HepG2 (cell line): ENCODE measurements at regions of chr16 and their contacts with region 1.

Region 1: GRCh38 chr16:57893559-57894389 is 77.2 kb downstream of the CNGB1 start:
- DNase-seq: peak; percentile 99
- ATAC-seq: peak; percentile 65
- H3K4me3 ChIP-seq: peak overlapping the region; percentile 52 to 71 (median 62)
- H3K27ac ChIP-seq: peak overlapping the region; percentile 95
- H3K4me1 ChIP-seq: peaks cover 94% of the 10 kb centered on the region
- H3K27me3 ChIP-seq: no peaks in the 10 kb centered on the region; a peak in 1 of 5 replicates
- CTCF ChIP-seq: no peak
- EP300 ChIP-seq: peak; percentile 83 to 95
- POLR2A ChIP-seq: peak; percentile 13 to 59; a peak in 3 of 4 replicates
- RAD21 ChIP-seq: no peak

Region 2: GRCh38 chr16:57795431-57795878 is 98.3 kb before region 1 on chr16:
- CTCF ChIA-PET with region 1: no interaction called
- POLR2A ChIA-PET with region 1: interaction called, 25 read pairs
- in situ Hi-C with region 1: no loop called
- intact Hi-C with region 1: no loop called
- DNase-seq: peak; percentile 73
- ATAC-seq: peak; percentile 3; the same call in 1 of the 3 replicates
- H3K4me3 ChIP-seq: no peak overlapping the region; a peak in 1 of 6 replicates
- H3K27ac ChIP-seq: no peak overlapping the region
- H3K4me1 ChIP-seq: peaks cover 67% of the 10 kb centered on the region
- H3K27me3 ChIP-seq: no peaks in the 10 kb centered on the region
- CTCF ChIP-seq: peak; percentile 73
- EP300 ChIP-seq: no peak
- POLR2A ChIP-seq: no peak
- RAD21 ChIP-seq: peak; percentile 76

Region 3: DNA sequence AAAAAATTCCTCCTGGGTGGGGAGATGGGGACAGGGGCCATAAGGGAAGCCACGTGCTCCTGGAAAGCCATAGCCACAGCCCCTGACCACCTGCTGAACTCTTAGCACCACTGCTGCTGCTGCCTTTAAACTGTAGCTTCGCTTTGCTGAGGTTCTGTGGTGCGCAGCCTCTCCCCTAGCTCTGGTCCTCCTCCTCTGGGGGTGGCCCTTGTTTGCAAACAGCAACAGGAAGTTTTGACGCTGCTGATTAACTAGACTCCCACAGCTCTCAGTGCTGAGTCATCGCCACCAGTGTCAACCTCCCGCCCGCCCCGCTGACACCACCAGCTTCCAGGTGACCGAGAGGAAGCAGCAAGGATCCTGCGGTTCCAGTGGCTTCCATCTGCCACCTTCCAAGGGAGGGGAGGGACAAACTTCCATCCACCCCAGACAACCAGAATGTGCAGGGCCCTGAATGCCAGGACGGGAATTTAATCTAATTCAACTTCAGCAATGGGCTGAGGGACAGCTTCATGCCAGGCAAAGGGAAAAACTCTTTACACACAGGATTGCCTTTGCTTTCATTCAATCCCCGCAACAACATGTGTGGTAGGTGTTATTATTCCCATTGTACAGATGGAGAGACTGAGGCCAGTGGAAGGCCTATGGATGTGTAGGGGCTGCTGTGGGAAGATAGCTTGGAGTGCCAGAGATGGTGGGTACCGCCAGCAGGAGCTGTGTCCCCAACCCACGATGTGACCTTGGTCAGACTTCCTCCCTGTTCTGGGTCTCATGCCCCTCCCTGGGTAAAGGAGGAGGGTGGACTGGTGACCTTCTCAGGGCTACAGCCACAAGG is 83.4 kb before region 1 on chr16:
- CTCF ChIA-PET with region 1: no interaction called
- POLR2A ChIA-PET with region 1: interaction called, 12 read pairs
- in situ Hi-C with region 1: no loop called
- intact Hi-C with region 1: loop called (anchors 1 kb)
- DNase-seq: peak; percentile 92
- ATAC-seq: peak; percentile 93
- H3K4me3 ChIP-seq: peak overlapping the region in 1 of 3 experiments; percentile 41; a peak in 2 of 6 replicates
- H3K27ac ChIP-seq: peak overlapping the region; percentile 63
- H3K4me1 ChIP-seq: peaks cover 71% of the 10 kb centered on the region
- H3K27me3 ChIP-seq: no peaks in the 10 kb centered on the region
- CTCF ChIP-seq: peak; percentile 26; the same call in 1 of the 2 replicates
- EP300 ChIP-seq: peak in 1 of 2 experiments; percentile 80; a peak in 2 of 4 replicates
- POLR2A ChIP-seq: peak; percentile 40 to 85; a peak in 3 of 4 replicates
- RAD21 ChIP-seq: no peak

Region 4: GRCh38 chr16:57871456-57871855 is 22.3 kb before region 1 on chr16:
- CTCF ChIA-PET with region 1: no interaction called
- POLR2A ChIA-PET with region 1: interaction called, 13 read pairs
- in situ Hi-C with region 1: no loop called
- intact Hi-C with region 1: no loop called
- DNase-seq: no peak
- ATAC-seq: no peak
- H3K4me3 ChIP-seq: no peak overlapping the region
- H3K27ac ChIP-seq: no peak overlapping the region
- H3K4me1 ChIP-seq: peaks cover 24% of the 10 kb centered on the region
- H3K27me3 ChIP-seq: 0 out of 5 replicates have a peak, but pooled peaks cover 0 to 4% of the 10 kb centered on the region in 2 experiments
- CTCF ChIP-seq: no peak
- EP300 ChIP-seq: no peak
- POLR2A ChIP-seq: no peak
- RAD21 ChIP-seq: no peak

Region 5: GRCh38 chr16:57920215-57920879 is 26.6 kb after region 1 on chr16:
- CTCF ChIA-PET with region 1: no interaction called
- POLR2A ChIA-PET with region 1: no interaction called
- in situ Hi-C with region 1: no loop called
- intact Hi-C with region 1: no loop called
- DNase-seq: no peak
- ATAC-seq: no peak
- H3K4me3 ChIP-seq: no peak overlapping the region
- H3K27ac ChIP-seq: no peak overlapping the region
- H3K4me1 ChIP-seq: no peaks in the 10 kb centered on the region
- H3K27me3 ChIP-seq: peaks cover 2 to 26% of the 10 kb centered on the region in 2 experiments; a peak in 3 of 5 replicates
- CTCF ChIP-seq: no peak
- EP300 ChIP-seq: no peak
- POLR2A ChIP-seq: no peak
- RAD21 ChIP-seq: no peak

Region 6: DNA sequence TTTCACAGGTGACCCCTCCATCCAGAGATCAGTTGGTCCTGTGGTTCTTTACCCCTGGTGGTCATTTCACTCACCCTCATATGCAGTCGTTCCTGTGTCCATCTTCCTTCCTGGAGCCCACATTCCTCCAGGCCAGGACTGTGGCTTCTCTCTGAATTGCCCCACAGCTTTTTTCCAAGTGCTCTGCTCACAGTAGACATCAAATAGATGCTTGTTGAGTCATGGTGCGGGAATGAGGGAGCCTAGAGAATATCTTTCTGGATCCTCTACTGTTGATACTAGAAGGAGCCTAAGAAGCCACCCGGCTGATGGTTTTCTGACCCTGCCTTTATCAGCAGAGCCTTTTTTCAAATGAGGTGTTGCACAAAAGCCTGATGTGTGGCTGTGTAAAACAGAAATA is 117.9 kb after region 1 on chr16:
- CTCF ChIA-PET with region 1: no interaction called
- POLR2A ChIA-PET with region 1: no interaction called
- in situ Hi-C with region 1: no loop called
- intact Hi-C with region 1: no loop called
- DNase-seq: peak; percentile 41
- ATAC-seq: peak; percentile 71
- H3K4me3 ChIP-seq: no peak overlapping the region
- H3K27ac ChIP-seq: no peak overlapping the region
- H3K4me1 ChIP-seq: peaks cover 22% of the 10 kb centered on the region
- H3K27me3 ChIP-seq: no peaks in the 10 kb centered on the region
- CTCF ChIP-seq: no peak
- EP300 ChIP-seq: no peak
- POLR2A ChIP-seq: no peak
- RAD21 ChIP-seq: no peak

Region 7: GRCh38 chr16:58129097-58129936 is 235.5 kb after region 1 on chr16 and contains the start of gene CFAP20:
- CTCF ChIA-PET with region 1: no interaction called
- POLR2A ChIA-PET with region 1: no interaction called
- in situ Hi-C with region 1: no loop called
- intact Hi-C with region 1: loop called (anchors 2 kb)
- DNase-seq: peak; percentile 100
- ATAC-seq: peak; percentile 89
- H3K4me3 ChIP-seq: peak within 1 kb of the TSS; percentile 67 to 95 (median 92)
- H3K27ac ChIP-seq: peak within 1 kb of the TSS; percentile 91
- H3K4me1 ChIP-seq: peaks cover 44% of the 10 kb centered on the region
- H3K27me3 ChIP-seq: no peaks in the 10 kb centered on the region
- CTCF ChIP-seq: peak; percentile 35
- EP300 ChIP-seq: peak in 1 of 2 experiments; percentile 67; a peak in 3 of 4 replicates
- POLR2A ChIP-seq: peak; percentile 92 to 97
- RAD21 ChIP-seq: peak; percentile 63
- total RNA-seq, gene CFAP20: 87.4 and 103 TPM in 2 replicates